K562 (cell line): ENCODE measurements at regions of chr9 and their contacts with region 1.

Region 1: GRCh38 chr9:137217276-137218211 is 4.5 kb downstream of the RNF208 start:
- DNase-seq: peak; percentile 84 to 92 (median 88)
- ATAC-seq: peak; percentile 88
- H3K4me3 ChIP-seq: peak overlapping the region; percentile 40
- H3K27ac ChIP-seq: peak overlapping the region; percentile 72
- H3K4me1 ChIP-seq: peaks cover 28 to 88% of the 10 kb centered on the region in 2 experiments
- H3K27me3 ChIP-seq: no peaks in the 10 kb centered on the region
- CTCF ChIP-seq: peak in 1 of 3 experiments; percentile 27; a peak in 2 of 6 replicates
- EP300 ChIP-seq: no peak
- POLR2A ChIP-seq: peak; percentile 70
- RAD21 ChIP-seq: no peak; a peak in 1 of 4 replicates

Region 2: DNA sequence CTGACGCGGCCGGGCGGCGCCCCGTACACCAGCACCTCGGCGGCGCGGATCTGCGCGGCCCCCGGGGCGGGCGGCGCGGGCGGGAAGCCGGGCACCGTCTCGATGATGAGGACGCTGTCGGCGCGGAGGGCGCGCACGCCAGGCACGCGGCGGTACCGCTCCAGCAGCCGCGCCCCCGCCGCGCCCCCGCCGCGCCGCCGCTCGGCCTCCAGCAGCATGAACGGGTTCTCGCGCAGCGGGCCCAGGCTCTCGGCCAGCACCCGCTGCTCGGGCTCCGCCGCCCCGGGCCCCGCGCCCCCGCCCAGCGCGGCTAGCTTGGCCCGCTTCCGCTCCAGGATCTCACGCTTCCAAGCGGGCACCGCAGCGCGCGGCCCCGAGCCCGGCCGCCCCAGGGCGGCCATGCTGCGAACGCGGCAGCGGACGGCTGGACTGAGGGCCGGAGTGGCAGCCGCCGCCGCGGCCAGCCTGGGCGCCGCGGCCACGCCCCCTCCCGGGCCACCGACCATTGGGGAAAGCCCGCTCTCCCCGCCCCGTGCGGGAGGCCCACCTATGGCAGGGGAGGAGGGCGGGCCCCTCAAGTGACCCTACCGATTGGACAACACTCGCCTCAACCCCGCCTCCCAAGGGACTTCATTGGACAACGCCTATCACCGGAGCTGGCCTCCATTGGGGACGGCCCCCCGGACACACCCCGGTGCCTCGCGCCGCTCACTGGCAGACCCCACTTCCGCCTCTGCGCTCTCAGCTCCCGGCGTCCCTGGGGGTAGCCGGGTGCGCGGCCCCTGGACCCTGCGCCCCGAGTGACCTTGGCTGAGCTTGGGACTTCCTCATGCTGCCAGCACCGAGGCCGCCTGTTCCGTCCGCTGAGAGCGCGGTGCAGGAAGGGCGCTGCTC is 17.0 kb before region 1 on chr9 and contains the start of gene TPRN:
- CTCF ChIA-PET with region 1: no interaction called
- POLR2A ChIA-PET with region 1: interaction called, 7 read pairs
- in situ Hi-C with region 1: no loop called
- intact Hi-C with region 1: loop called (anchors 2 kb)
- DNase-seq: peak; percentile 99 to 100 (median 100)
- ATAC-seq: peak; percentile 96
- H3K4me3 ChIP-seq: peak within 1 kb of the TSS; percentile 52
- H3K27ac ChIP-seq: peak within 1 kb of the TSS; percentile 75
- H3K4me1 ChIP-seq: peaks cover 31 to 86% of the 10 kb centered on the region in 2 experiments
- H3K27me3 ChIP-seq: no peaks in the 10 kb centered on the region
- CTCF ChIP-seq: no peak
- EP300 ChIP-seq: no peak
- POLR2A ChIP-seq: peak; percentile 88
- RAD21 ChIP-seq: no peak
- polyA plus RNA-seq, gene TPRN: 0.31 to 0.34 TPM

Region 3: DNA sequence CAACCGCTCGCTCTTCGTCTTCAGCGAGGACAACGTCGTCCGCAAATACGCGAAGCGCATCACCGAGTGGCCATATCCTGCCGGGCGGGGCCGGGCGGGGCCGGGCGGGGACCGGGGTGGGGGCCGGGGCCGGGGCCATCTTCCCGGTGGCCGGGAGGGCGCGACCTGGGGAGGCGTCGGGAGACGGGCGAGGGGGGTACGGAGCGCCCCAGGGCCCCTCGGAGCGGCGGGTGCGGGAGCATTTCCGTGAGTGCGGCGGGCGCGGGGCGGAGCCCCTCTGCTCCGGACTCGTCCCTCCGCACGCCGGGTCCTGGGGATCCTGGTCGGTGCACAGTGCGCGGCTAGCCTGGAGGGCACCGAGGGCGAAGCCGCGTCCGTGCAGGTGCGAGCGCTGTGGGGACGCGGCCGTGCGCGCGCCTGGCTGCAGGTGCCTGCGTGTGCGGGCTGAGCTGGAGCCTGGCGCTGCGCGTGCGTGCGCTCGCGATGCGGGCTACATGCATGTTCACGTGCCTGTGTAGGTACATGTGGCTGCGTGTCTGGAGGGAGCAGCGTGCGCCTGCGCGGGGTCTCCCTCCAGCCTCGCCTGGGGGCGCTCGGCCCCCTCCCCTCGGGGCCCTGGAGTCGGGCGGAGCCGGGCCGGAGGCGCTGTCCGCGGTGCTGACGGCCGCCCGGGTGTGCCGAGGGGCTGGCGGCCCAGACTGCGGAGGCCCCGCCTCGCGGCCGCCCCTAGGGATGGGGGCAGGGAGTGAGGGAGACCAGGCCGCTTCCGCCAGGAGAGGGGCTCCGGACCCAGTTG is 660.8 kb after region 1 on chr9:
- CTCF ChIA-PET with region 1: no interaction called
- POLR2A ChIA-PET with region 1: no interaction called
- in situ Hi-C with region 1: no loop called
- intact Hi-C with region 1: no loop called
- DNase-seq: peak; percentile 32 to 86 (median 76)
- ATAC-seq: peak; percentile 90
- H3K4me3 ChIP-seq: no peak overlapping the region
- H3K27ac ChIP-seq: no peak overlapping the region
- H3K4me1 ChIP-seq: peaks cover 0 to 17% of the 10 kb centered on the region in 2 experiments; a peak in 3 of 5 replicates
- H3K27me3 ChIP-seq: peaks cover 4 to 50% of the 10 kb centered on the region in 2 experiments; a peak in 2 of 5 replicates
- CTCF ChIP-seq: no peak
- EP300 ChIP-seq: no peak
- POLR2A ChIP-seq: no peak
- RAD21 ChIP-seq: peak in 1 of 2 experiments; percentile 19; a peak in 1 of 4 replicates